ENCODE measurements at regions of chr11 and their contacts with region 1.

Region 1: GRCh38 chr11:2002807-2003206 is 5.2 kb upstream of the H19 start:
- H3K4me3 ChIP-seq: no peak overlapping the region
- H3K27ac ChIP-seq: no peak overlapping the region
- H3K4me1 ChIP-seq: no peaks in the 10 kb centered on the region
- CTCF ChIP-seq: no peak

Region 2: DNA sequence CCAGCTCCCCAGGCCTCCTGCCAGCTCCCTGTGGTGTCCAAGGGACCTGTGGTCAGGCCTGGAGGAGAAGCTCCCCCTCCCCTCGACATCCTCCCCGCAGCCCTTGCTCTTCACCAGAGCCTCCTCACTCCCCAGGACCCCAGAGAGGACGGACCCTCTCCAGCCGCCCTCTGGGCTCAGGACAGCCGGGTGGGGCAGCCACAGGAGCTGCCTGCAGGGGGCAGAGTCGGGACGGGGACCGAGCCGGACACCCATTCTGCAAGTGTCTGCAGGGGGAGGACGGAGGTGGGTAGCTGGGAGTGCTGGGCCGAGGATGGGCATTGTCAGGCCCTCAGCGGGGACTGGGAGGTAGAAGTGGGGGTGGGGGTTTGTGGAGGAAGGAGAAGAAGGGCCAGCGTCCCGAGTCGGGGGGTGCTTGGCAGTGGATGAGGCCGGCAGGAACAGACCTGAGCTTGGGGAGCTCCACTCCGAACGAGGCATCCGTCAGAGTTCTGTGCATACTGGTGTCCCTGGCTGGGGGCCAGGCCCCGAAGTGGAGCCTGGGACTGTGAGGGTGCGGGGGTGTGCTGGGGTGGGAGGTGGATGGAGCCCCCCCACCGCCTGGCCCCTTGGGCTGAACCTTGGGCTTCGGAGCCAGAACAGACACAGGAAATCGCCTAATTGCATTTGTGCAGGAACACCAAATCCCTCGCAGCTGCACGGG is 126.3 kb before region 1 on chr11:
- CTCF ChIA-PET with region 1: interaction called, 22 read pairs
- POLR2A ChIA-PET with region 1: no interaction called
- H3K4me3 ChIP-seq: no peak overlapping the region
- H3K27ac ChIP-seq: no peak overlapping the region
- H3K4me1 ChIP-seq: no peaks in the 10 kb centered on the region
- CTCF ChIP-seq: peak; percentile 15; the same call in 1 of the 2 replicates

Measured in HEK293 (cell line).